ENCODE measurements at regions of chr19 and their contacts with region 1.

Region 1: DNA sequence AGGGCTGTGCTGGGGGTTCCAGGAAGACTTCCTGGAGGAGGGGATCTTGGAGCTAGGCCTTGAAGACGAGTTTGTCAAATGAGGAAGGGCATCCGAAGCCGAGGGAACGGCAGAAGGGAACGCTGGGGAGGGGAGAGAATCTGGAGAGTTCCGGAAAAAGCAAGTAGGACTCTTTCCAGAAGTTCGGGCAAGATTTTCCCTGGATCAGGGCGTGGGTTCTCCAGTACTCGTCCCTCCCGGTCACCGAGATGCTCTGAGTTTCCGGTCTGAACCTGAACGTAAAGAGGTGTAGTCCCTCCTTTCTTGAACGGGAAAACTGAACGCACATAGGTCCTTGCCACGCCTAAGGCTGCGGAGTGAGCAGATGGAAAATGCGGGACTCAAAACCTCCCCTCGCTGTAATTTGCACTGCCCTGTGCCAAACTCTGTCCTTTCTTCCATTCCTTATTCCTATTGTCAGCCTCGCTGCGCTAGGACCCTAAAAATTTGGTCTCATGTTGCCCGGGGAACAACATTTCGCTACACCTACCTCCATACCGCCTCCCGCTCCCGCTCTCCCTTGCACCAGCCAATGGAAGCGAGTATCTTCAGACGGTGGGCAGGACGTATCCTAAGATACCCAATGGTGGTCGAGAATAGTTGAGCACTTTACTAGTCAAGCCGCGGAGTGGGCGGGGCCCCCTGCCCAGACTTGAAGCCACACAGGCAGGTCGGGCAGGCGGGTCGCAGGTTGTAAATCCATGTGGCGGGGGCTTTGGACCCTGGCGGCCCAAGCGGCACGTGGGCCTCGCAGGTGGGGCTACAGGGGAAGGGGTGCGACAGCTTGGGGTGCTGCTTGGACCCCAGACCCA is at the start of gene GTPBP3:
- DNase-seq: peak; percentile 93 to 99 (median 97)
- H3K4me3 ChIP-seq: peak within 1 kb of the TSS; percentile 52 to 99
- H3K4me3 Mint-ChIP-seq: peak within 1 kb of the TSS; percentile 90 to 98 (median 94)
- H3K27ac ChIP-seq: peak within 1 kb of the TSS; percentile 84
- H3K27ac Mint-ChIP-seq: peak within 1 kb of the TSS; percentile 90 to 99 (median 97)
- H3K4me1 ChIP-seq: peaks cover 47% of the 10 kb centered on the region
- H3K4me1 Mint-ChIP-seq: peaks cover 18 to 53% (median 32%) of the 10 kb centered on the region in 4 donors
- H3K27me3 ChIP-seq: no peaks in the 10 kb centered on the region
- H3K27me3 Mint-ChIP-seq: no peaks in the 10 kb centered on the region
- total RNA-seq, gene GTPBP3: 53.7 to 58.4 TPM

Region 2: GRCh38 chr19:17245244-17245984 is 91.7 kb before region 1 on chr19 and contains the start of gene NR2F6:
- CTCF ChIA-PET with region 1: no interaction called
- POLR2A ChIA-PET with region 1: no interaction called
- intact Hi-C with region 1: no loop called
- DNase-seq: no peak
- H3K4me3 ChIP-seq: peak within 1 kb of the TSS in 1 of 2 donors; percentile 64
- H3K4me3 Mint-ChIP-seq: peak within 1 kb of the TSS; percentile 83 to 97 (median 86)
- H3K27ac ChIP-seq: peak within 1 kb of the TSS; percentile 42
- H3K27ac Mint-ChIP-seq: peak within 1 kb of the TSS in 5 of 7 donors; percentile 60 to 88 (median 79)
- H3K4me1 ChIP-seq: peaks cover 11% of the 10 kb centered on the region
- H3K4me1 Mint-ChIP-seq: peaks cover 0 to 4% (median 3%) of the 10 kb centered on the region in 4 donors
- H3K27me3 ChIP-seq: no peaks in the 10 kb centered on the region
- H3K27me3 Mint-ChIP-seq: no peaks in the 10 kb centered on the region
- total RNA-seq, gene NR2F6: 7.1 TPM

Region 3: GRCh38 chr19:17292286-17293097 is 44.6 kb before region 1 on chr19:
- CTCF ChIA-PET with region 1: interaction called, 7 read pairs
- POLR2A ChIA-PET with region 1: interaction called, 7 read pairs
- intact Hi-C with region 1: loop called (anchors 2 kb)
- DNase-seq: peak; percentile 77 to 85 (median 80)
- H3K4me3 ChIP-seq: peak overlapping the region; percentile 61 to 75
- H3K4me3 Mint-ChIP-seq: peak overlapping the region; percentile 88 to 92 (median 90)
- H3K27ac ChIP-seq: peak overlapping the region; percentile 20
- H3K27ac Mint-ChIP-seq: peak overlapping the region; percentile 47 to 89 (median 81)
- H3K4me1 ChIP-seq: peaks cover 6% of the 10 kb centered on the region
- H3K4me1 Mint-ChIP-seq: peaks cover 3 to 5% (median 4%) of the 10 kb centered on the region in 4 donors
- H3K27me3 ChIP-seq: no peaks in the 10 kb centered on the region
- H3K27me3 Mint-ChIP-seq: peaks cover 0 to 4% of the 10 kb centered on the region in 2 donors

Region 4: DNA sequence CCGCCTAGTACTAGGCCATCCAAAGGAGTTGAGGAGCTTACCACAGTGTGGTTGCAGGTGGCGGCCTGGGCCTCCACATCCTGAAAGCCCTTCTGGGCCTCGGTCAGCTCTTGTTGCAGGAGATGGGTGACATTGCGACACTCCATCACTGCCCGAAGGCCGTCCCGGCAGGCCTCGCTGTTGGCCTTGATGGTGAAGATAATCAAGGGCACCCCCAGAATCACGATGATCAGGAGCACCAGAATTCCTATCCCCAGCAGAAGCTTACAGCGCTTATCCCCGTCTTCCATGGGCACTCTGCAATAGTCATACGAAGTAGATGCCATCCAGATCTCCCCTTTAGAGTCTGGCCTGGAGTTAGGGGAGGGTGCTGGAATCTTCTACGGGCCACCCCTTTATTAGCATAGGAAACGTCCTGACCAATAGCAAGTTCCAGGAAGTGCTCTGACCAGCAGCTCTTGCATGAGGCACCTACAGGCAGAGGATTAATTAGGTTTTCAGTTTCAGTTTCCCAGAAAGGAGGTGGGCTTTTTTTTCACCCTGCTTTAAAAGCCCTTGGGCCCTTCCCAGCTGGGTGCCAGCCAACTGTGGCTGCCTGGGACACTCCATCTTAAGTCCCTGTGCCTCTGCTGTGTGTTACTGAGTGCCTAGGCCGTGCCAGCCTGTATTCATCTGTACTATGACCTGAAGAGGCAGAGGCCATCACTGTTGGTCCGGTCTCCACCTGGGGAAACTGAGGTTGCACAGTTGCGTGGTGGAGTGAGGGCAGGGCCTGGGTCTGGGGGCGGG is 68.3 kb after region 1 on chr19 and contains the start of gene BST2:
- CTCF ChIA-PET with region 1: no interaction called
- POLR2A ChIA-PET with region 1: interaction called, 6 read pairs
- intact Hi-C with region 1: loop called (anchors 5 kb)
- DNase-seq: peak; percentile 60 to 80 (median 65)
- H3K4me3 ChIP-seq: peak within 1 kb of the TSS; percentile 93 to 98
- H3K4me3 Mint-ChIP-seq: peak within 1 kb of the TSS; percentile 94 to 98 (median 94)
- H3K27ac ChIP-seq: peak within 1 kb of the TSS; percentile 88
- H3K27ac Mint-ChIP-seq: peak within 1 kb of the TSS; percentile 93 to 96 (median 94)
- H3K4me1 ChIP-seq: peaks cover 32% of the 10 kb centered on the region
- H3K4me1 Mint-ChIP-seq: peaks cover 20 to 45% (median 29%) of the 10 kb centered on the region in 4 donors
- H3K27me3 ChIP-seq: no peaks in the 10 kb centered on the region
- H3K27me3 Mint-ChIP-seq: no peaks in the 10 kb centered on the region
- total RNA-seq, gene BST2: 55.9 TPM

Region 5: DNA sequence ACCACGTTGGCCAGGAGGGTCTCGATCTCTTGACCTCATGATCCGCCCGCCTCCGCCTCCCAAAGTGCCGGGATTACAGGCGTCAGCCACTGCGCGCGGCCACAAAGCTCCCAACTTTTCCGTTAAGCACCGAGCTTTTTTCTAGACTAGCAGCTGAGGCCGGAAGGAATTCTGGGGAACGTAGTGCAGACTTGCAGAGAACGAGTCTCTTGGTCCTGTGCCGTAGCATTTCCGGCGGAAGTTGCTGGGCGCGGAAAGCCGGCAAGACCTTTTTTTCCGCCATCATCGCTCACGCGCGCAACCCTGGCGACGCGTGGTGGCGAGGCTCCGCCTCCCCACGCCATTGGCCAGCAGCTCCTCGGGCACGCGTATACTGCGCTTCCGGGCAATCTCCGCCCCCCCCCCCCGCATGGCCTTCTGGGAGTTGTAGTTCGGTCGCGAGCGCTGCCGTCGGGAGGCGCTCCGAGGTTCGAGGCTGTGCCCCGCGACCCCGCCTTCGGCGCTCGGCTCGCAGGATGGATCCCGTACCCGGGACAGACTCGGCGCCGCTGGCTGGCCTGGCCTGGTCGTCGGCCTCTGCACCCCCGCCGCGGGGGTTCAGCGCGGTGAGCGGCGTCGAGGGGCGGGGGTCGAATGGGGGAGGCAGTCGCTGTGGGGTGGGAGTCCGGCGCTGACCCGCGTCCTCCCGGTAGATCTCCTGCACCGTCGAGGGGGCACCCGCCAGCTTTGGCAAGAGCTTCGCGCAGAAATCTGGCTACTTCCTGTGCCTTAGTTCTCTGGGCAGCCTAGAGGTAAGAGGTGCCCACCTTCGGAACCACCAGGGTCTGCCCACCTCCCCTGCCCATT is 82.7 kb after region 1 on chr19 and contains the start of gene MVB12A:
- CTCF ChIA-PET with region 1: no interaction called
- POLR2A ChIA-PET with region 1: interaction called, 17 read pairs
- intact Hi-C with region 1: no loop called
- DNase-seq: peak; percentile 94 to 98 (median 97)
- H3K4me3 ChIP-seq: peak within 1 kb of the TSS; percentile 69 to 92
- H3K4me3 Mint-ChIP-seq: peak within 1 kb of the TSS; percentile 91 to 97 (median 94)
- H3K27ac ChIP-seq: peak within 1 kb of the TSS; percentile 67
- H3K27ac Mint-ChIP-seq: peak within 1 kb of the TSS; percentile 91 to 96 (median 93)
- H3K4me1 ChIP-seq: peaks cover 17% of the 10 kb centered on the region
- H3K4me1 Mint-ChIP-seq: peaks cover 13 to 26% (median 16%) of the 10 kb centered on the region in 4 donors
- H3K27me3 ChIP-seq: no peaks in the 10 kb centered on the region
- H3K27me3 Mint-ChIP-seq: no peaks in the 10 kb centered on the region
- total RNA-seq, gene MVB12A: 35.4 to 38.0 TPM